Right lobe of liver (tissue), 6 donors: ENCODE measurements at regions of chr3 and their contacts with region 1.

Region 1: GRCh38 chr3:195271116-195271858 is at the start of gene XXYLT1:
- DNase-seq: peak; percentile 91 to 92 (median 91)
- ATAC-seq: peak; percentile 92 to 95 (median 92)
- H3K4me3 ChIP-seq: peak within 1 kb of the TSS; percentile 78 to 95 (median 83)
- H3K27ac ChIP-seq: peak within 1 kb of the TSS; percentile 63 to 90 (median 78)
- H3K4me1 ChIP-seq: peaks cover 0 to 24% (median 4%) of the 10 kb centered on the region in 4 donors
- H3K27me3 ChIP-seq: no peaks in the 10 kb centered on the region
- CTCF ChIP-seq: peak; percentile 95 to 99 (median 98)
- POLR2A ChIP-seq: peak; percentile 1
- total RNA-seq, gene XXYLT1: 1.7 to 6.5 (median 2.1) TPM

Region 2: DNA sequence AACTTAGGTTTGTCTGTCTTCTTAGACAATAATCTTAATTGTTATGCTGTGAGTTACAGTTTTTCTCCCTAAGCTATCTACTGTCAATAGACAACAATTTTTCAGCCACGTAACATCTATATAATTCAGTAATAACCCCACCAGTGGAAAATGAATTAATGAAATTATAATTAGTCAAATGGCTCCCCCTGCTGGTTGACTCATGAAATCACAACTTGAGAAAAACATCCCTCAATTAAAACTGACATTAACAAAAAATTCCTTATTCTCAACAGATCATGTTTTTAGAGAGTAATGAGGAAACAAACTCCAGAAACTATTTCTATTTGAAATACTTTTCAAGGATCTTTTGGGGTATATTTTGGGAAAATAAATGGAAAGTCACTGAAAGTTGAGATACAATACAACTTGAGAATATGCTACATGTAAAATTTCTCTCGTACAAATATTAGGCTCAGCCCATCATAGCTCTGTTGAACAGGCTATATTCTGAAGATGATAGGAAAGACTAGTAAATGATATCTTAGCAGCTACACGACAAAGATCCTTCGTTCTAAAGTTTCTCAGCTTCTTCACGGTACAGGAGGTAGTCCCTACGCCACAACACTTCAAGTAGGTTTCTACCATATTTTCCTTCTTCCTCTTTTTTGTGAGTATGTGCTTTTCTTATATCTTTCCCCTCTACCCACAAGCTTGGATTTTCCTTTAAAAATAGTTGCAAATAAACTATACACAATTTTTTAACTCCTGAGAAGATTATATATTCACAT is 251.2 kb after region 1 on chr3:
- intact Hi-C with region 1: loop called in 1 of 2 experiments (anchors 5 kb)
- DNase-seq: no peak
- ATAC-seq: peak in 3 of 4 donors; percentile 42 to 58 (median 43)
- H3K4me3 ChIP-seq: no peak overlapping the region
- H3K27ac ChIP-seq: no peak overlapping the region
- H3K4me1 ChIP-seq: no peaks in the 10 kb centered on the region
- H3K27me3 ChIP-seq: no peaks in the 10 kb centered on the region
- CTCF ChIP-seq: peak; percentile 68 to 86 (median 75)
- POLR2A ChIP-seq: no peak